ENCODE measurements at regions of chr17 and their contacts with region 1.

Region 1: DNA sequence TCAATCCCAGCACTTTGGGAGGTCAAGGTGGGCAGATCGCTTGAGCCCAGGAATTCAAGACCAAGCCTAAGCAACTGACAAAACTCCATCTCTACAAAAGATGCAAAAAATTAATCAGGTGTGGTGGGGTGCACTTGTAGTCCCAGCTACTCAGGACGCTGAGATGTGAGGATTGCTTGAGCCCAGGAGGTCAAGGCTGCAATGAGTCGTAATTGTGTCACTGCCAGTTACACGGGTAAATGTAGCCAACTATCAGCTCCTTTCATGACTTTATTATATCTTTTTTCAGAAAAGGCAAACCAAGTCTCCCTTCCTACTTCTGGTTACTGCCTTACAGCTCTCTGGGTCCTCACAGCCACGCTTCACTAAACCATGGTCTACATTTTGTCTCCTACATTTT is 4.0 kb downstream of the SDF2 start:
- DNase-seq: no peak
- ATAC-seq: no peak

Region 2: DNA sequence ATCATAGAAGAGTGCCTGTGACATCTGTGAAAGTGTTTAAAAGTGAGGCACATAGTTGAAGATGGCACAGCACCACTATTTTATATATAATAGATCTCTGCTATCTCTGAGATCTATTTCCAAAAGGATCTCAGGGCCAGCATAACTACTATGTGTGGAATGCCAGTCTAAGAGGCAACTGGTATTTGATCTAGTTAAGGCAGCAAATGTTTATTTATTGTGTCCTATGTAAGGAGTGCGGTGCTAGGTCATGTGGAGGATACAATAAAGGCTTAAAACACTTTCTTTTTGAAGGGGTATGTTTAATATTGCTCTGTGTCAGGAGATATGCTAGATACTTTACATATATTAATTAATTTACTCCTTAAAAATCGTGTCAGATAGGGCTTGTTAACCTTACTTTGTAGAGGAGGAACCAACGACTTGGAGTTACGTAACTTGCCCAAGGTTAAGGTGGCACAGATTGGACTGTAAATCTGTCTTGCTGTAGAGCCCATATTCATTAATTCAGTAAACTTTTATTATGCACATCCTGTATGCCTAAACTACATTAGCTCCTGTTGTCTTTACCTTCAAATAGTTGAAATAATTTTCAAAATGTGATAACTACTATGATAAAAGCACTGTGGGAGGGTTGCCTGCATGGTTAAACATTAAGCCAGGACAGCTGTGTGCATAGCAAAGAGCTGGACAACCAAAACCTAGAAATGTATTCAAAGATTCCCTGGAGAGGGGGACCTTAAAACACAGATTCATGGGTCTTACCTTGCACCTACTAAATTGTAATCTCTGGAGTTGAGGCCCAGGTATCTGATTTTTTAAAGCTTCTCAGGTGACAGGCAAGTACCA is 532.0 kb before region 1 on chr17:
- intact Hi-C with region 1: loop called (anchors 5 kb)
- DNase-seq: no peak
- ATAC-seq: no peak

Region 3: DNA sequence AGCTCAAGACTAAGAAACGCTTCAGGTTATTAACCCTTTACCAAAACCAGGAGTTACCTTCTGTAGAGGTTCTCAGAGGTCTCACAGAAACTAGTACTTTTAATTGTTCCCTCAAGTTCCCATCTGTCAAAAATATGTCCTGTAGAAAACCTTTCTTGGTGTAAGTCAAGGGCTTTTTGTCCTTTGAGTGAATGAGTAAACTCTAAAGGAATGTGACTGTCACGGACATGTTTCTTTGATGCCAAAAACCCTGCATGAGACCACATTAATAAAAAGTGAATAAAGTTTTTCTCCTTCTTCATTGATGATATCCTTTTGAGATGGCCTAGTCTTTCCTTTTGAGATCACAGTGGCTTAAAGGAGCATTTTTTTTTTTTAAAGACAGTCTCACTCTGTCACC is 512.4 kb before region 1 on chr17:
- intact Hi-C with region 1: no loop called
- DNase-seq: no peak
- ATAC-seq: no peak